ENCODE measurements at regions of chr10 and their contacts with region 1.

Region 1: DNA sequence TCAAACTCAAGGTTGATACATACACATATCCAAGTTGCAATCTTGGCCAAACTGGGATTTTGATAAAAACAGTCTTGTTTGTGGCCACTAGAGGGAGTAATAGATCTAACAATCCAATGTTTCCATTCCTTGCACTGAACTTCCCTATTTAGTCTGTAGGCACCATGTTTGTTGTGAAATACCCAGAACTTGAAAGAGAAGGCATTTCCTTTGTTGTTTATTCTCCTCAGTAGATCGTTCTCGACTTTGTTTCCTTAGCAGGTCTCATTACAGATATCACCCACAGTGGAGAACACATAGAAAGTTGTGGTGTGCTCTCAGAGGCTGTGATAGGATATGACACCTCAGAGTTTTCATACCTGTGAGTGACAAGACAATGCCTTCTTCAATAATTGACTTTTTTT is 70.3 kb upstream of the MXI1 start:
- DNase-seq: peak; percentile 46 to 70 (median 66)
- H3K4me3 ChIP-seq: no peak overlapping the region
- H3K4me3 Mint-ChIP-seq: peak overlapping the region in 1 of 8 donors; percentile 0
- H3K27ac ChIP-seq: peak overlapping the region; percentile 7
- H3K27ac Mint-ChIP-seq: peak overlapping the region; percentile 7 to 83 (median 18)
- H3K4me1 ChIP-seq: peaks cover 24% of the 10 kb centered on the region
- H3K4me1 Mint-ChIP-seq: peaks cover 17 to 30% (median 26%) of the 10 kb centered on the region in 4 donors
- H3K27me3 ChIP-seq: no peaks in the 10 kb centered on the region
- H3K27me3 Mint-ChIP-seq: no peaks in the 10 kb centered on the region

Region 2: GRCh38 chr10:109934958-109935706 is 202.0 kb before region 1 on chr10:
- CTCF ChIA-PET with region 1: no interaction called
- POLR2A ChIA-PET with region 1: no interaction called
- intact Hi-C with region 1: no loop called
- DNase-seq: peak; percentile 24 to 46 (median 44)
- H3K4me3 ChIP-seq: peak overlapping the region in 1 of 2 donors; percentile 26
- H3K4me3 Mint-ChIP-seq: peak overlapping the region; percentile 74 to 95 (median 88)
- H3K27ac ChIP-seq: peak overlapping the region; percentile 37
- H3K27ac Mint-ChIP-seq: peak overlapping the region; percentile 90 to 98 (median 97)
- H3K4me1 ChIP-seq: peaks cover 71% of the 10 kb centered on the region
- H3K4me1 Mint-ChIP-seq: peaks cover 47 to 80% (median 63%) of the 10 kb centered on the region in 4 donors
- H3K27me3 ChIP-seq: no peaks in the 10 kb centered on the region
- H3K27me3 Mint-ChIP-seq: no peaks in the 10 kb centered on the region

Region 3: GRCh38 chr10:110158051-110159005 is 21.2 kb after region 1 on chr10:
- CTCF ChIA-PET with region 1: interaction called, 4 read pairs
- POLR2A ChIA-PET with region 1: interaction called, 7 read pairs
- intact Hi-C with region 1: loop called (anchors 2 kb)
- DNase-seq: no peak
- H3K4me3 ChIP-seq: no peak overlapping the region
- H3K4me3 Mint-ChIP-seq: peak overlapping the region in 1 of 8 donors; percentile 28
- H3K27ac ChIP-seq: no peak overlapping the region
- H3K27ac Mint-ChIP-seq: peak overlapping the region in 1 of 7 donors; percentile 21
- H3K4me1 ChIP-seq: peaks cover 22% of the 10 kb centered on the region
- H3K4me1 Mint-ChIP-seq: peaks cover 11 to 40% (median 20%) of the 10 kb centered on the region in 4 donors
- H3K27me3 ChIP-seq: peaks cover 16% of the 10 kb centered on the region
- H3K27me3 Mint-ChIP-seq: peaks cover 39 to 63% of the 10 kb centered on the region in 2 donors

Region 4: GRCh38 chr10:110273474-110273873 is 136.3 kb after region 1 on chr10:
- CTCF ChIA-PET with region 1: interaction called, 61 read pairs
- POLR2A ChIA-PET with region 1: interaction called, 11 read pairs
- intact Hi-C with region 1: no loop called
- DNase-seq: peak; percentile 20 to 74 (median 36)
- H3K4me3 ChIP-seq: no peak overlapping the region
- H3K4me3 Mint-ChIP-seq: peak overlapping the region in 5 of 8 donors; percentile 6 to 87 (median 66)
- H3K27ac ChIP-seq: no peak overlapping the region
- H3K27ac Mint-ChIP-seq: peak overlapping the region in 6 of 7 donors; percentile 33 to 96 (median 89)
- H3K4me1 ChIP-seq: peaks cover 47% of the 10 kb centered on the region
- H3K4me1 Mint-ChIP-seq: peaks cover 32 to 74% (median 61%) of the 10 kb centered on the region in 4 donors
- H3K27me3 ChIP-seq: no peaks in the 10 kb centered on the region
- H3K27me3 Mint-ChIP-seq: no peaks in the 10 kb centered on the region

Region 5: GRCh38 chr10:110285501-110285900 is 148.4 kb after region 1 on chr10:
- CTCF ChIA-PET with region 1: interaction called, 61 read pairs
- POLR2A ChIA-PET with region 1: no interaction called
- intact Hi-C with region 1: no loop called
- DNase-seq: no peak
- H3K4me3 ChIP-seq: no peak overlapping the region
- H3K4me3 Mint-ChIP-seq: no peak overlapping the region
- H3K27ac ChIP-seq: no peak overlapping the region
- H3K27ac Mint-ChIP-seq: no peak overlapping the region
- H3K4me1 ChIP-seq: no peaks in the 10 kb centered on the region
- H3K4me1 Mint-ChIP-seq: peaks cover 1 to 13% (median 4%) of the 10 kb centered on the region in 4 donors
- H3K27me3 ChIP-seq: no peaks in the 10 kb centered on the region
- H3K27me3 Mint-ChIP-seq: no peaks in the 10 kb centered on the region

Region 6: GRCh38 chr10:110547139-110547761 is 410.1 kb after region 1 on chr10:
- CTCF ChIA-PET with region 1: interaction called, 7 read pairs
- POLR2A ChIA-PET with region 1: no interaction called
- intact Hi-C with region 1: loop called (anchors 1 kb)
- DNase-seq: peak in 4 of 5 donors; percentile 67 to 74 (median 70)
- H3K4me3 ChIP-seq: no peak overlapping the region
- H3K4me3 Mint-ChIP-seq: no peak overlapping the region
- H3K27ac ChIP-seq: no peak overlapping the region
- H3K27ac Mint-ChIP-seq: peak overlapping the region in 1 of 7 donors; percentile 59
- H3K4me1 ChIP-seq: peaks cover 8% of the 10 kb centered on the region
- H3K4me1 Mint-ChIP-seq: peaks cover 4 to 8% (median 5%) of the 10 kb centered on the region in 4 donors
- H3K27me3 ChIP-seq: peaks cover 3% of the 10 kb centered on the region
- H3K27me3 Mint-ChIP-seq: peaks cover 1 to 13% of the 10 kb centered on the region in 2 donors

Measured in CD4-positive, alpha-beta memory T cell (primary cell).